ENCODE measurements at regions of chr2 and their contacts with region 1.

Region 1: GRCh38 chr2:217785544-217786045 is 217.2 kb downstream of the TNS1 start:
- DNase-seq: peak; percentile 62
- H3K4me3 Mint-ChIP-seq: no peak overlapping the region
- H3K27ac Mint-ChIP-seq: no peak overlapping the region
- H3K4me1 Mint-ChIP-seq: peaks cover 5% of the 10 kb centered on the region
- H3K27me3 Mint-ChIP-seq: peaks cover 16% of the 10 kb centered on the region
- CTCF ChIP-seq: peak; percentile 95

Region 2: GRCh38 chr2:217657252-217657651 is 128.3 kb before region 1 on chr2:
- CTCF ChIA-PET with region 1: no interaction called
- POLR2A ChIA-PET with region 1: no interaction called
- intact Hi-C with region 1: no loop called
- DNase-seq: no peak
- H3K4me3 Mint-ChIP-seq: no peak overlapping the region
- H3K27ac Mint-ChIP-seq: no peak overlapping the region
- H3K4me1 Mint-ChIP-seq: peaks cover 10% of the 10 kb centered on the region
- H3K27me3 Mint-ChIP-seq: peaks cover 38% of the 10 kb centered on the region
- CTCF ChIP-seq: no peak

Region 3: DNA sequence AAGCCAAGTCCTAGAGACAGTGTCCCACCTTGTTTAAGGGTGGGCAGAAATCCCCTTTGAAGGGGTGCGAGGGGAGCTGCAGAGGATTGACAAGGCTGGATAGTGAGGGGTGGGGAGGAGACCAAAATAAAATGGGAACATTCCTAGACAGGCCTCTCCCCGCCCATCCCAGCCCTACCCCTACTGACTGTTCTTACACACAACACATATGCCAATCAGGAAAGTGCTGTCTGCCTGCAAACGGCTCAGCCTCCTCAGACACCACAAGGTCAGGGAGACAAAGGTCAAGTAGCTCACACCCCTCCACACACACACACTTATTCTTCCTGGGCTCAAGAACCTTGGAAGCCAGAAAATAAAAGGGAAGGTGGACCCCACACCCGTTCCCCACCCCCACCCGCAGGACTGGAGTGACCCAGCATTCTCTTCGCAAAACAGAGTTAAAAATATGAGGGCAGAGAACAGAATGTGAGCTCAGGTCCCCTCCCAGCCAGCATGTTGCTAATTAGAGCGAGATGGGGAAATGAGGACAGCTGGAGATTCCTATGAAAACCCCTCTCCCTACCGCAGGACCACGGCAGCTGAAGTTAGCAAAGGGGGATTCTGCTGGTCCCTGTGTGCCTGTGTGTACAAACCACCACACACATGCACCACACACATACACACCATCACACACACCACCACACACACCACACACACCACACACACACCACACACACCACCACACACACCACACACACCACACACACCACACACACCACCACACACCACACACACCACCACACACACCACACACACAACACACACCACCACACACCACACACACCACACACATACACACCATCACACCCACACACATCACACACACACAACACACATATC is 19.4 kb after region 1 on chr2:
- CTCF ChIA-PET with region 1: interaction called, 59 read pairs
- POLR2A ChIA-PET with region 1: no interaction called
- intact Hi-C with region 1: no loop called
- DNase-seq: no peak
- H3K4me3 Mint-ChIP-seq: no peak overlapping the region
- H3K27ac Mint-ChIP-seq: no peak overlapping the region
- H3K4me1 Mint-ChIP-seq: peaks cover 7% of the 10 kb centered on the region
- H3K27me3 Mint-ChIP-seq: no peaks in the 10 kb centered on the region
- CTCF ChIP-seq: no peak

Region 4: DNA sequence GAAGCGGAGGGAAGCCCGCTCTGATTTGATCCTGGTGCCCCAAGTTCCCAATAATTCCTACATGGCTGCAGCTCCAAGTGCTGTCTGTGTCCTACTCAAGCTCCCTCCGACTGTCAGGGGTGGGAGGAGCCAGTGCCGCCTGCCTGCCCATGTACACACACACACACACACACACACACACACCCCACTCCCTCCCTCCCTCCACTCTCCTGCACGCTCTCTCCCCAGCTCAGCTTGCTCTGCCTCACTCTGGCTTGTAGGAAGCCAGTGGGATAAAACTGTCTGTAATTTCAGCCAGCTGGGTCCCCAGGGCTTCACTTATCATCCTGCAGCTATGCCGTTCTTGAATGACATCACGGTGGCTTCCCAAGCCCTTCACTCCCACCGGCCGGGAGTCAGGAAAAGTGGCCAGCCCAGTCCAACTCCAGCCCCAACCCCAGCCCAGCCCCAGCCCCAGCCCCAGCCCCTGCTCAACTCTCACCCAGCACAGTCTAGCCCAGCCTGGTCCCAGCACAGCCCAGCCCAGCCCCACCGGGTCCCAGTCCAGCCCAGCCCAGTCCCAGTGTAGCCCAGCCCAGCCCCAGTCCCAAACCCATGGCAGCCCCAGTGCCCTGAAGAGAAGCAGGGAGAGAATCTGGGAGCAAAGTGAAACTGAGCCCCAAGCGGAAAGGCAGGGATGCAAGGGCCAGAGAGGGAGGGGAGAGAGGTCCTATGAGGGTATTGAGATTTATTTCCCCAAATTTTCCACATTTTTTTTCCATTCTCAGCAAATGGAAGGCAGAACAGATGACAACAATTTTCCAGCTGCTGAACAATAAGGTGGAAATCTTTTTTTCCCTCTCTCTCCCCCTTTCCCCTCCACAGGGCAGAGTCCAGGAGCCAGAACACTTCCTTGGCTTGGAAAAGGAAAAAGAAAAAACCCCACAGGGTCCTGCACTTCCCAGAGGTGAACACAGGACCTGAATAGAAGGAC is 73.2 kb after region 1 on chr2:
- CTCF ChIA-PET with region 1: interaction called, 113 read pairs
- POLR2A ChIA-PET with region 1: no interaction called
- intact Hi-C with region 1: no loop called
- DNase-seq: no peak
- H3K4me3 Mint-ChIP-seq: no peak overlapping the region
- H3K27ac Mint-ChIP-seq: no peak overlapping the region
- H3K4me1 Mint-ChIP-seq: no peaks in the 10 kb centered on the region
- H3K27me3 Mint-ChIP-seq: peaks cover 22% of the 10 kb centered on the region
- CTCF ChIP-seq: no peak

Region 5: GRCh38 chr2:217909156-217909820 is 123.7 kb after region 1 on chr2:
- CTCF ChIA-PET with region 1: interaction called, 10 read pairs
- POLR2A ChIA-PET with region 1: no interaction called
- intact Hi-C with region 1: no loop called
- DNase-seq: no peak
- H3K4me3 Mint-ChIP-seq: no peak overlapping the region
- H3K27ac Mint-ChIP-seq: no peak overlapping the region
- H3K4me1 Mint-ChIP-seq: no peaks in the 10 kb centered on the region
- H3K27me3 Mint-ChIP-seq: peaks cover 28% of the 10 kb centered on the region
- CTCF ChIP-seq: no peak

Region 6: DNA sequence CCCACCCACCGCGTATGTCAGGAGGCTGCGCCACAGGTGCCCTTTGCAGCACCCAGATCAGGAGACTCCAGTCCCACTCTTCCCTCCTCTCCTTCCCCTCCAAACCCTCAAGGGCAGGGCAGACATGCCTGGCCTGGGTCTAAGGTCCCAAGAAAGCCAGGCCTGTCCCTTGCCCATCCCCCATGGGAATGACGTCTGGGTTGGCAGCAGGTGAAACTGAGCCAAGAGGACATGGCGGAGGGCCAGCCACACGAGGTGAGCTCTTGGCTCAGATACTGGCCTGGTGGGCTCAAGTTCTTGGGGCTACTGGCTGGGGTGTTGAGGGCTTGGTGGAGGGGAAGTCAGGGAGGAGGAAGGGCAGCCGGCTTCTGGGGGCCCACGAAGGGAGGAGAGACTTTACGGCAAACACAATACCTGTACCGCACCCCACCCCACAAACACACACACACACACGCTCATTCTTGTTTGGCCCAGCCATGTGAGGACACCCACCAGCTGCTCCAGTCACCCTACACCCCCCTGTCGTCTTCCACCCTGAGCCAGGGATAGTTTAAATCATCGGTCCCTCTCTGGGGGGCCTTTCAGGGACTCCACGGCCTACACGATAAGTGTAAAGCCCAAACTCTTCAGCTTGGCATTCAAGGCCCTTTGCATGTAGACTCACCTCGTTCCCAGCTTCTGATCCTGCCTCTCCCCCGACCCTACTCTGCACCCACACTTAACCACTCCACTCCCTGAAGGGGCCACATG is 241.3 kb after region 1 on chr2:
- CTCF ChIA-PET with region 1: interaction called, 154 read pairs
- POLR2A ChIA-PET with region 1: no interaction called
- intact Hi-C with region 1: no loop called
- DNase-seq: peak; percentile 33
- H3K4me3 Mint-ChIP-seq: no peak overlapping the region
- H3K27ac Mint-ChIP-seq: no peak overlapping the region
- H3K4me1 Mint-ChIP-seq: no peaks in the 10 kb centered on the region
- H3K27me3 Mint-ChIP-seq: no peaks in the 10 kb centered on the region
- CTCF ChIP-seq: no peak

Region 7: DNA sequence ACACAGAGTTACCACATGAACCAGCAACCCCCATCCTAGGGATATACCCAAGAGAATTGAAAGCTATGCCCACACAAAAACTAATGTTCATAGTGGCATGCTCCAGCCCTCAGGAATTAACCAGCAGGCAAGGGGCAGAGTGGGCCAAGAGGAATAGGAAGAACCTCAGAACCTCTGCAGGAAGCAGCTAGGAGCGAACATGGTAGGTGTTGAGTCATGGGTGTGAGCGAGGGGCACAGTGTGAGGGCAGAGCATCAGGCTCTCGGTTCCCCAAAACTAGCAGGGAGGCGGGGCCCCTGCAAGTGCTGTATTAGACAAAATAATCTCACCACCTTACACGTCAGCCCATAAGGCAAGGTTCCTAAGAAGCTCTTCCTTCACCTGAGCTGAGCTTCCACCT is 277.9 kb after region 1 on chr2:
- CTCF ChIA-PET with region 1: interaction called, 20 read pairs
- POLR2A ChIA-PET with region 1: no interaction called
- intact Hi-C with region 1: loop called (anchors 1 kb)
- DNase-seq: no peak
- H3K4me3 Mint-ChIP-seq: no peak overlapping the region
- H3K27ac Mint-ChIP-seq: no peak overlapping the region
- H3K4me1 Mint-ChIP-seq: no peaks in the 10 kb centered on the region
- H3K27me3 Mint-ChIP-seq: peaks cover 54% of the 10 kb centered on the region
- CTCF ChIP-seq: no peak

Region 8: GRCh38 chr2:218202266-218202665 is 416.7 kb after region 1 on chr2:
- CTCF ChIA-PET with region 1: no interaction called
- POLR2A ChIA-PET with region 1: no interaction called
- intact Hi-C with region 1: no loop called
- DNase-seq: peak; percentile 28
- H3K4me3 Mint-ChIP-seq: no peak overlapping the region
- H3K27ac Mint-ChIP-seq: no peak overlapping the region
- H3K4me1 Mint-ChIP-seq: no peaks in the 10 kb centered on the region
- H3K27me3 Mint-ChIP-seq: peaks cover 35% of the 10 kb centered on the region
- CTCF ChIP-seq: no peak

Measured in MCF 10A (cell line).